Activated CD8-positive, alpha-beta T cell treated with anti-CD3 and anti-CD28 coated beads for 36 hours (primary cell): ENCODE measurements at regions of chr2 and their contacts with region 1.

Region 1: DNA sequence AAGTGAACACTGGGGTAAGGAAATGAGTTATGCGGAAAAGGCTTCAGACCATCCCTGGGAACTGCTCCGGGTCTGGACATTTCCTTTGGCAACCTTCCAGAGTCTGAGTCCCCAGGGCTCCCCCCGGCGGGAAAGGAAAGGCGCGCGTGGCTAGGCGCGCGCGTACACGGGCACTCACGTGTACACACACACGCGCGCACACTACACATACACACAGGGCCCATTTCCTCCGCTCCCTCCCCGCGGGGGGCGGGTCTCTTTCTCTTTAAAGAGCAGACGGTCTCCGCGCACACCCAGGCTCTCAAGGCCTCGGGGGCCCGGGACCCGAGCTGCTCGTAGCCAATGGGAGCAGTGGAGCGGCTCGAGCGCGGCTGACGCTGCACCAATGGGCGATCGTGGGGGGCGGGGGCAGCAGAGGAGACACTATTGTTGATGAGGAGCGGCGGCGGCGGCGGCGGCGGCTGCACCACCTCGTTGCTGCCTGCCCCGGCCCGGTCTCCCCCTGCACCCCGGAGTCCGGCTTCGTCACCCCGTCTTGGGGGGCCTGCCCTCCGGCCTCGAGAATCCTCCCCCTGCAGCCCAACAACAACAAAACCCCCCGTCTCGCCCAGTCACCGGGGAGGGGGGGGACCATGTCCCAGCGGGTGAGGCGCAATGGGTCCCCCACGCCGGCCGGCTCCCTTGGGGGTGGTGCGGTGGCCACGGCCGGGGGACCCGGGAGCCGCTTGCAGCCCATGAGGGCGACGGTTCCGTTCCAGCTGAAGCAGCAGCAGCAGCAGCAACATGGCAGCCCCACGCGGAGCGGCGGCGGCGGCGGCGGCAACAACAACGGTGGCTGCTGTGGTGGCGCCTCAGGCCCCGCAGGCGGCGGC is at the start of gene FAM117B:
- DNase-seq: peak; percentile 100
- ATAC-seq: peak; percentile 90
- H3K4me3 Mint-ChIP-seq: peak within 1 kb of the TSS; percentile 93
- H3K27ac Mint-ChIP-seq: peak within 1 kb of the TSS; percentile 97
- H3K4me1 Mint-ChIP-seq: peaks cover 42% of the 10 kb centered on the region
- H3K27me3 Mint-ChIP-seq: no peaks in the 10 kb centered on the region
- CTCF ChIP-seq: no peak
- total RNA-seq, gene FAM117B: 17.2 to 19.4 TPM

Region 2: DNA sequence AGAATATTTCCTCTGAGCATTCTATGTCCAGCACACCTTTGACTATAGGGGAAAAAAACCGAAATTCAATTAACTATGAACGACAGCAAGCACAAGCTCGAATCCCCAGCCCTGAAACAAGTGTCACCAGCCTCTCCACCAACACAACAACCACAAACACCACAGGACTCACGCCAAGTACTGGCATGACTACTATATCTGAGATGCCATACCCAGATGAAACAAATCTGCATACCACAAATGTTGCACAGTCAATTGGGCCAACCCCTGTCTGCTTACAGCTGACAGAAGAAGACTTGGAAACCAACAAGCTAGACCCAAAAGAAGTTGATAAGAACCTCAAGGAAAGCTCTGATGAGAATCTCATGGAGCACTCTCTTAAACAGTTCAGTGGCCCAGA is 79.4 kb before region 1 on chr2:
- CTCF ChIA-PET with region 1: no interaction called
- POLR2A ChIA-PET with region 1: no interaction called
- intact Hi-C with region 1: no loop called
- DNase-seq: peak; percentile 50
- ATAC-seq: peak; percentile 45
- H3K4me3 Mint-ChIP-seq: no peak overlapping the region
- H3K27ac Mint-ChIP-seq: no peak overlapping the region
- H3K4me1 Mint-ChIP-seq: peaks cover 8% of the 10 kb centered on the region
- H3K27me3 Mint-ChIP-seq: no peaks in the 10 kb centered on the region
- CTCF ChIP-seq: no peak

Region 3: GRCh38 chr2:202703091-202703490 is 68.3 kb after region 1 on chr2:
- CTCF ChIA-PET with region 1: no interaction called
- POLR2A ChIA-PET with region 1: interaction called, 4 read pairs
- intact Hi-C with region 1: loop called (anchors 10 kb)
- DNase-seq: no peak
- ATAC-seq: peak; percentile 25
- H3K4me3 Mint-ChIP-seq: no peak overlapping the region
- H3K27ac Mint-ChIP-seq: peak overlapping the region; percentile 90
- H3K4me1 Mint-ChIP-seq: peaks cover 63% of the 10 kb centered on the region
- H3K27me3 Mint-ChIP-seq: no peaks in the 10 kb centered on the region
- CTCF ChIP-seq: no peak

Region 4: GRCh38 chr2:203301667-203302066 is 666.9 kb after region 1 on chr2:
- CTCF ChIA-PET with region 1: no interaction called
- POLR2A ChIA-PET with region 1: no interaction called
- intact Hi-C with region 1: no loop called
- DNase-seq: no peak
- ATAC-seq: no peak
- H3K4me3 Mint-ChIP-seq: no peak overlapping the region
- H3K27ac Mint-ChIP-seq: no peak overlapping the region
- H3K4me1 Mint-ChIP-seq: no peaks in the 10 kb centered on the region
- H3K27me3 Mint-ChIP-seq: no peaks in the 10 kb centered on the region
- CTCF ChIP-seq: no peak